ENCODE measurements at regions of chr14 and their contacts with region 1.

Region 1: DNA sequence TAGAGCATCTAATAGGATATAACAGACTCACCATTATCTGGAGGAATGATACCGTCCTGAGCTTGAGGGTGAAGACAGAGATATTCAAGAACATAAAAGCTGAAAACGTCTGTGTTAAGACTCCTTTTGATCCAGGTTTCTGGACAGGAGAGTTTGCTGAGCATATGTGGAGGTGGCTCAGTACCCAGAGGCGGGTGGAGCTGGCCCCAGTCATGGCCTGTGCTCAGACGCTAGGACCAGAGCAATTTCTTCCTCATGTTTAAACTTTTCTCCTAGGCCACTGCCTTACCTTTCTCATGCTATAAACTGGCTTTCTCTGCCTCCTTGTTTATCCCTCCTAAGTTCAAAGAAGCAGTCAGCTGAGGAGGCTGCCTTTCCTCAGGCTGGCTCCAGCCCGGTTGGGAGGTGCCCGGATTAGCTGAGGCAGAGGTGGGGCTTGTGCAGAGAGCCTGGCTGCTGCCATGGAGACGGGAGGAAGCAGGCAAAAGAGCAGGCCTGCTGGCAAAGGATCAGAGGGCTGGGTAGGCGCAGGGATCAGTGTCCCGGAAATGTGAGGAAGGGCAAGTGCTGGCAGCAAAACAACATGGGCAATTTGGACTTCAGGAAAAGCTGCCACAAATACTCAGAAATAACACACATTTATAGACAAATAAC is 13.7 kb downstream of the COA8 start:
- DNase-seq: peak; percentile 89
- ATAC-seq: peak; percentile 98
- H3K4me3 ChIP-seq: no peak overlapping the region
- H3K27ac ChIP-seq: peak overlapping the region; percentile 65
- H3K4me1 ChIP-seq: peaks cover 19% of the 10 kb centered on the region
- H3K27me3 ChIP-seq: no peaks in the 10 kb centered on the region
- CTCF ChIP-seq: no peak

Region 2: GRCh38 chr14:103594265-103594664 is 17.8 kb after region 1 on chr14:
- CTCF ChIA-PET with region 1: interaction called, 3 read pairs
- POLR2A ChIA-PET with region 1: no interaction called
- intact Hi-C with region 1: loop called (anchors 1 kb)
- DNase-seq: peak; percentile 96
- ATAC-seq: peak; percentile 83
- H3K4me3 ChIP-seq: peak overlapping the region; percentile 47; the same call in 1 of the 2 replicates
- H3K27ac ChIP-seq: peak overlapping the region; percentile 97
- H3K4me1 ChIP-seq: peaks cover 51% of the 10 kb centered on the region
- H3K27me3 ChIP-seq: no peaks in the 10 kb centered on the region
- CTCF ChIP-seq: no peak

Region 3: GRCh38 chr14:103628684-103629502 is 52.4 kb after region 1 on chr14 and contains the start of gene KLC1:
- CTCF ChIA-PET with region 1: no interaction called
- POLR2A ChIA-PET with region 1: interaction called, 4 read pairs
- intact Hi-C with region 1: loop called (anchors 1 kb)
- DNase-seq: peak; percentile 58
- ATAC-seq: peak; percentile 20
- H3K4me3 ChIP-seq: peak within 1 kb of the TSS; percentile 97
- H3K27ac ChIP-seq: peak within 1 kb of the TSS; percentile 93
- H3K4me1 ChIP-seq: peaks cover 59% of the 10 kb centered on the region
- H3K27me3 ChIP-seq: no peaks in the 10 kb centered on the region
- CTCF ChIP-seq: no peak
- total RNA-seq, gene KLC1: 306 and 466 TPM in 2 replicates

Region 4: DNA sequence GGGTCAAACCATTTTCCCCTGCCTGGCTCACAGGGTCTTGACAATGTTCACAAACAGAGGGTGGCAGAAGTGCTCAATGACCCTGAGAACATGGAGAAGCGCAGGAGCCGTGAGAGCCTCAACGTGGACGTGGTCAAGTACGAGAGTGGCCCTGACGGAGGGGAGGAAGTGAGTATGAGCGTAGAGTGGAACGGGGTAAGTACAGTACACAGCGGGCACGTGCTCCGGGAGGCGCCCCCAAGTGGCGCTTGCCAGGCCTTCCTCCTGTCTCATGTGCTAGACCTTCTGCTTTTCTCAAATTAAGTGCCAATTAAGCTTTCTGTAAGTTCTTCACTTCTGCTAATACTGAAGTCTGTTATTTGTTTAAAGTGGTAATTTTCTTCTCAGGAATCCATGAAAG is 102.9 kb after region 1 on chr14:
- CTCF ChIA-PET with region 1: no interaction called
- POLR2A ChIA-PET with region 1: no interaction called
- intact Hi-C with region 1: loop called (anchors 5 kb)
- DNase-seq: peak; percentile 23
- ATAC-seq: no peak; the same call in 1 of the 2 replicates
- H3K4me3 ChIP-seq: no peak overlapping the region
- H3K27ac ChIP-seq: no peak overlapping the region
- H3K4me1 ChIP-seq: peaks cover 5% of the 10 kb centered on the region; the same call in 1 of the 2 replicates
- H3K27me3 ChIP-seq: no peaks in the 10 kb centered on the region
- CTCF ChIP-seq: peak; percentile 76

Region 5: DNA sequence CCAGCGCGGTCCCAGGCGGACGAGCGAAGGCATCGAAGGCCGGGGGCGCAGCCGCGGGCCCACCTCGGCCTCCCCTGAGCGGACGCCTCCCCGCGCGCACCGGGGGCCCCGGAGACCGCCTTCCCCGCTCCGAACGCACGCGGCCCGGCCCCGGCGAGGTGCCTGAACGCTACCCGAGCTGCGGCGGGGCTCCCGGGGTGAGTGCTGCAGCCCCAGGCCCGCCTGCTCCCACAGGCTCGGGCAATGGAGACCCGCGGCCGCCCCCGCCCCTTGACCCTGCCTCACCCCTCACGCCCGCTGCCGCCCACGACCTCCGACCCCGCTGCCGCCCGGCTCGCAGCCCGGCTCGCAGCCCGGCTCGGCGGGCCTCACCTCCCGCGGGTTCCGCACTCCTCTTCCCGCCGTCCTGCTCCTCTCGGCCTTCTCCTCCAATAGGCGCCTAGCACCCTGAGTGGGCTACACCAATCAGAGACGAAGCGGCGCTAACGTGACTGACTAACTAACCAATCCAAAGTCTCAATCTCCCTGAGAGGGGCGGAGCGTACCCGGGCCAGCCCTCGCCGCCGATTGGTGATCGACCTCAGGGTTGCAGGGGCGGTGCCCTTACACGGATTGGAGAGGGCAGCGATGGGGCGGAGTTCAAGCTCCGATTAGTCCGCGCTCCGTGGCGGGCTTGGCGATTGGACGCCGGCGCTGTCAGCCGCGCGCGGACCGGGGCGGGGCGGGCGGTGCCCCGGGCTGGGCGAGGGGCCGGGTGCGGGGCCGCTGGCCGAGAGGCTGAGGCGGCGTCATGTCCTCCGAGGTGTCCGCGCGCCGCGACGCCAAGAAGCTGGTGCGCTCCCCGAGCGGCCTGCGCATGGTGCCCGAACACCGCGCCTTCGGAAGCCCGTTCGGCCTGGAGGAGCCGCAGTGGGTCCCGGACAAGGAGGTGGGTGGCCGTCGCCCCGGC is 138.8 kb after region 1 on chr14 and contains the starts of genes XRCC3 and ZFYVE21:
- CTCF ChIA-PET with region 1: interaction called, 4 read pairs
- POLR2A ChIA-PET with region 1: no interaction called
- intact Hi-C with region 1: loop called (anchors 10 kb)
- DNase-seq: peak; percentile 99
- ATAC-seq: peak; percentile 77
- H3K4me3 ChIP-seq: peak within 1 kb of the TSS; percentile 87
- H3K27ac ChIP-seq: peak within 1 kb of the TSS; percentile 29
- H3K4me1 ChIP-seq: peaks cover 51% of the 10 kb centered on the region
- H3K27me3 ChIP-seq: no peaks in the 10 kb centered on the region
- CTCF ChIP-seq: no peak
- total RNA-seq, gene XRCC3: 61.3 and 80.3 TPM in 2 replicates
- total RNA-seq, gene ZFYVE21: 47.2 and 50.1 TPM in 2 replicates